B cell (primary cell): ENCODE measurements at regions of chr20 and their contacts with region 1.

Region 1: GRCh38 chr20:15654208-15654645 is 919.0 kb downstream of the KIF16B start:
- DNase-seq: peak; percentile 76
- ATAC-seq: peak; percentile 99
- H3K4me3 ChIP-seq: no peak overlapping the region
- H3K4me3 Mint-ChIP-seq: no peak overlapping the region
- H3K27ac ChIP-seq: no peak overlapping the region
- H3K27ac Mint-ChIP-seq: no peak overlapping the region
- H3K4me1 ChIP-seq: peaks cover 3 to 7% of the 10 kb centered on the region in 2 donors
- H3K4me1 Mint-ChIP-seq: peaks cover 6% of the 10 kb centered on the region
- H3K27me3 ChIP-seq: no peaks in the 10 kb centered on the region
- H3K27me3 Mint-ChIP-seq: no peaks in the 10 kb centered on the region
- CTCF ChIP-seq: peak; percentile 82

Region 2: GRCh38 chr20:15265581-15266309 is 388.5 kb before region 1 on chr20:
- CTCF ChIA-PET with region 1: interaction called, 8 read pairs
- POLR2A ChIA-PET with region 1: no interaction called
- intact Hi-C with region 1: loop called (anchors 2 kb)
- DNase-seq: no peak
- ATAC-seq: no peak
- H3K4me3 ChIP-seq: no peak overlapping the region
- H3K4me3 Mint-ChIP-seq: no peak overlapping the region
- H3K27ac ChIP-seq: no peak overlapping the region
- H3K27ac Mint-ChIP-seq: no peak overlapping the region
- H3K4me1 ChIP-seq: peaks cover 14 to 16% of the 10 kb centered on the region in 2 donors
- H3K4me1 Mint-ChIP-seq: peaks cover 35% of the 10 kb centered on the region
- H3K27me3 ChIP-seq: no peaks in the 10 kb centered on the region
- H3K27me3 Mint-ChIP-seq: no peaks in the 10 kb centered on the region
- CTCF ChIP-seq: no peak

Region 3: GRCh38 chr20:15528391-15529111 is 125.7 kb before region 1 on chr20:
- CTCF ChIA-PET with region 1: no interaction called
- POLR2A ChIA-PET with region 1: no interaction called
- intact Hi-C with region 1: no loop called
- DNase-seq: no peak
- ATAC-seq: no peak
- H3K4me3 ChIP-seq: no peak overlapping the region
- H3K4me3 Mint-ChIP-seq: no peak overlapping the region
- H3K27ac ChIP-seq: no peak overlapping the region
- H3K27ac Mint-ChIP-seq: no peak overlapping the region
- H3K4me1 ChIP-seq: no peaks in the 10 kb centered on the region
- H3K4me1 Mint-ChIP-seq: no peaks in the 10 kb centered on the region
- H3K27me3 ChIP-seq: no peaks in the 10 kb centered on the region
- H3K27me3 Mint-ChIP-seq: no peaks in the 10 kb centered on the region
- CTCF ChIP-seq: no peak